IMR-90 (cell line): ENCODE measurements at regions of chr1 and their contacts with region 1.

Region 1: DNA sequence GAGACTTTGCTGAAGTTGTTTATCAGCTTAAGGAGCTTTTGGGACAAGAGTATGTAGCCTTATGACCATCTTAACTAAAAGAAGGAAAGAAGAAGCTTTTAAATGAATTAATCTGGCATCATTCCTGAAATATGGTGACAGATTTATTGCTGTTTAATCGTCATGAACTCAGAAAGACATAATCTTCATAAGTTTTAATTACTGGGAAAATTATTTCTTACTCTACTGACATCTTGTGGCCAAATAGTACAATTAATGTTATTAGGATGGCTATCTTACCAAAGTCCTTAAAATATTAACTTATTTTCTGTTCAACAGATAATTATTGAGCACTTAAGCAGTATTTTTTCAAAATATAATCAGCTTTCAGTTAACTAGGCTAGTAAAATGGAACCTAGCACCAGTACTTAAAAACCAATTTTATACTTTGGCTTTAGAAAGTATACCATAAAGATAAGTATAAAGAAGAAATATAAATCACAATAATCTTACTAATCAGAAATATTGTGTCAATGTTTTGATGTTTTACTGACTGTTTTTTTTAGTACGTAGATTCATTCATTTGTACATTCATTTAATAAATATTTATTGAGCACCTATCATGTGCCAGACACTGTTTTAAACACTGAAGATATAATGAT is 34.7 kb upstream of the GPR25 start:
- DNase-seq: peak; percentile 41
- ATAC-seq: peak; percentile 35
- H3K4me3 ChIP-seq: no peak overlapping the region
- H3K27ac ChIP-seq: no peak overlapping the region
- H3K4me1 ChIP-seq: no peaks in the 10 kb centered on the region; the same call in 1 of the 2 replicates
- H3K27me3 ChIP-seq: no peaks in the 10 kb centered on the region
- CTCF ChIP-seq: peak; percentile 50
- POLR2A ChIP-seq: no peak
- RAD21 ChIP-seq: peak; percentile 32

Region 2: DNA sequence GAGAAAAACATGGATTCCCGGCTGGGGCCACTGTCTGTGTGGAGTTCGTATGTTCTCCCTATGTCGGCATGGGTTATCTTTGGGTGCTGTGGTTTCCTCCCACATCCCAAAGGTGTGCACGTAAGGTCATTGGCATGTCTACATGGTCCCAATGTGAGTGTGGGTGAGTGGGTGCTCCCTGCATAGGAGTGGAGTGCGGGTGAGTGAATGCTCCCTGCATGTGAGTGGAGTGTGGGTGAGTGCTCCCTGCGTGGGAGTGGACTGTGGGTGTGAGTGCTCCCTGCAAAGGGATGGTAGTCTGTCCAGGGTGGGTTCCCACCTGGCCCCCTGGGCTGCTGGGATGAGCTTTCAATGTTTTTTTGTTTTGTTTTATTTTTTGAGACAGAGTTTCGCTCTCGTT is 199.3 kb before region 1 on chr1:
- CTCF ChIA-PET with region 1: interaction called, 14 read pairs
- POLR2A ChIA-PET with region 1: no interaction called
- dilution Hi-C with region 1: no loop called
- in situ Hi-C with region 1: no loop called
- intact Hi-C with region 1: no loop called
- DNase-seq: no peak
- ATAC-seq: no peak
- H3K4me3 ChIP-seq: no peak overlapping the region
- H3K27ac ChIP-seq: no peak overlapping the region
- H3K4me1 ChIP-seq: peaks cover 2% of the 10 kb centered on the region
- H3K27me3 ChIP-seq: no peaks in the 10 kb centered on the region
- CTCF ChIP-seq: no peak
- POLR2A ChIP-seq: no peak
- RAD21 ChIP-seq: no peak

Region 3: DNA sequence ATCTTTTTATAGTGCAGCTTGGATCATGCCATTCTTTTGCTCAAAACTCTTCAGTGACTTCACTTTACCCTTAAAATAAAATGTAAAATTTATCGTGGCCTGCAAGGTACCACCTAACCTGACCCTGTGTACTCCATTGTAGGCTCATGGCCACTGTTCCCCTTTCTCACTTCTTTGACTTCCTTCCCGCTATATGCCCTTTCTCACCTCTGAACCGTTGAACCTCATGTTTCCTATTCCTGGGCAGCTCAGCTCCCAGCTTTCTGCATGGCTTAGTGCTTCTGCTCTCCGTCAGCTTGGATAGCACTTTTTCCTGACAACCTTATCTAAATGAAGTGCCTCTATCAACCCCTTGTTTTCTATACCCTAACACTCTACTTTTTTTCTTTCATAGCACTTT is 26.3 kb before region 1 on chr1:
- CTCF ChIA-PET with region 1: no interaction called
- POLR2A ChIA-PET with region 1: no interaction called
- dilution Hi-C with region 1: no loop called
- in situ Hi-C with region 1: no loop called
- intact Hi-C with region 1: loop called (anchors 1 kb)
- DNase-seq: no peak
- ATAC-seq: no peak
- H3K4me3 ChIP-seq: no peak overlapping the region
- H3K27ac ChIP-seq: no peak overlapping the region
- H3K4me1 ChIP-seq: peaks cover 2% of the 10 kb centered on the region; the same call in 1 of the 2 replicates
- H3K27me3 ChIP-seq: no peaks in the 10 kb centered on the region
- CTCF ChIP-seq: no peak
- POLR2A ChIP-seq: no peak
- RAD21 ChIP-seq: no peak